ENCODE measurements at regions of chr20 and their contacts with region 1.

Region 1: GRCh38 chr20:62500237-62500864 is 24.6 kb upstream of the GATA5 start:
- DNase-seq: peak; percentile 65
- H3K4me3 Mint-ChIP-seq: no peak overlapping the region
- H3K27ac Mint-ChIP-seq: peak overlapping the region; percentile 85
- H3K4me1 Mint-ChIP-seq: peaks cover 23% of the 10 kb centered on the region
- H3K27me3 Mint-ChIP-seq: no peaks in the 10 kb centered on the region

Region 2: GRCh38 chr20:62523473-62524203 is 23.3 kb after region 1 on chr20:
- intact Hi-C with region 1: loop called (anchors 1 kb)
- DNase-seq: peak; percentile 63
- H3K4me3 Mint-ChIP-seq: peak overlapping the region; percentile 17
- H3K27ac Mint-ChIP-seq: peak overlapping the region; percentile 76
- H3K4me1 Mint-ChIP-seq: peaks cover 13% of the 10 kb centered on the region
- H3K27me3 Mint-ChIP-seq: no peaks in the 10 kb centered on the region

Region 3: DNA sequence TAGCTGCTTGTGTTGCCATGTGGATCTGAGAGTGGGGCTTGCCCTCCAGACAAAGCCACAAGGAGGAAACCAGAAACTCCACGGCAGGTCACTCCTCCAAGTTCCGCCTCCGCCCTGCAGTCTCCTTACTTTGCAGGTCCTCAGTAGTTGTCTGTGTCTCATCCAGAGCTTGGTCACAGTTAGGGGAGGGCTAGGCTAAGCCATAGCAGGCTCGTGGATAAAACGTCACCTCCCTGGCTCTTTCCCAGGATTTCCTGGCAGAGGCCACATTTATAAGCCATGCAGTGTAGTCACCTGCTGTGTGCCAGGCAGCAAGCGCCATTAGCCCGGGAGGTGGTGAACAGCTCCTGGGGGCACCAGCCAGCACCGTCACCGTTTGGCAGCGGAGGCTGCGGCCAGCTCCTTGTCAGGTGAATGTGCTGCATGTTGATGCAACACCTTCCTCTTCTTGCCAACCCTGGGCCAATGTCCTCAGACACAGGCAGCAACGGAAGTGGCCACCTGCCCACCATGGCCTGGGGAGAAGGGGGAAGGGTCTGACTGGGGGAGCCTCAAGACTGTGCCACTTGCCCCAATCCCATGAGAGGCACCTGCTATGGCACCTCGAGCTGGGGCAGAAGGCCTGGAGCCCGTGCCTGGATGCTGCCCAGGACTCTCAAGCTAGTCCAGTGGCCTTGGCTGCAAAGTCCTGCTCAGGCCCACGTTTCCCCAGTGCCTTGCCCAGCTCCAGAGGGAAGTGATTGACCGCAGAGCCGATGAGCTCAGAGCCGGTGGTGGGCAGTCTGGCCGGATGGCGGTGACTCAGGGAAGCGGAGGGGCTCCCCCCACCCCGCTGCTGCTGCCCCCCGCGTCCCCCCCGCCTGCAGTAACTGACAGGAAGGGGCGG is 102.9 kb after region 1 on chr20:
- intact Hi-C with region 1: loop called (anchors 5 kb)
- DNase-seq: peak; percentile 34
- H3K4me3 Mint-ChIP-seq: peak overlapping the region; percentile 66
- H3K27ac Mint-ChIP-seq: peak overlapping the region; percentile 56
- H3K4me1 Mint-ChIP-seq: peaks cover 37% of the 10 kb centered on the region
- H3K27me3 Mint-ChIP-seq: peaks cover 8% of the 10 kb centered on the region

Region 4: GRCh38 chr20:62782149-62782892 is 282.0 kb after region 1 on chr20:
- intact Hi-C with region 1: no loop called
- DNase-seq: no peak
- H3K4me3 Mint-ChIP-seq: no peak overlapping the region
- H3K27ac Mint-ChIP-seq: no peak overlapping the region
- H3K4me1 Mint-ChIP-seq: peaks cover 3% of the 10 kb centered on the region
- H3K27me3 Mint-ChIP-seq: no peaks in the 10 kb centered on the region

Region 5: DNA sequence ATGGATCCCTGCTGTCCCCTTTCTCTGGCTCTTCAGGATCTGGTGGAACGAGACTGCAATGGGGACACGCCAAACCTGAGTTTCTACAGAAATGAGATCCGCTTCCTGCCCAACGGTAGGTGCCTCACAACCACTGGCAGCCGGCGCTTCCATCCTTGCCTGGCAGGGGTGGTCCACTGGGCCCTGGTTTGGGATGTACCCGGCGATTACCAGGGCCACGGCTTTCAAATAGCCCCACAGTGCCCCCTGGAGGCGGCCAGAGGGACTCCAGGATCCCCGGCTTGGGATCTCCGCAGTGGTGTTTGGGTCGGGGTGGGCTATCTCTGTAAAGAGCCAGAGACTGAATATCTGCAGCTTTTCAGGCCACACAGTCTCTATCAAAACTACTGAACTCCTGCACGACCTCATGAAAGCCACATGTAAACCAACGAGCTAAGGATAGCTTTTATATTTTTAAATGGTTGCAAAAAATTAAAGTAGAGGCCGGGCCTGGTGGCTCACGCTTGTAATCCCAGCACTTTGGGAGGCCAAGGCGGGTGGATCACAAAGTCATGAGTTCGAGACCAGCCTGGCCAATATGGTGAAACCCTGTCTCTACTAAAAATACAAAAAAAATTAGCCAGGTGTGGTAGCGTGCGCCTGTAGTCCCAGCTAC is 308.0 kb after region 1 on chr20:
- intact Hi-C with region 1: loop called (anchors 1 kb)
- DNase-seq: peak; percentile 62
- H3K4me3 Mint-ChIP-seq: peak overlapping the region; percentile 57
- H3K27ac Mint-ChIP-seq: no peak overlapping the region
- H3K4me1 Mint-ChIP-seq: peaks cover 20% of the 10 kb centered on the region
- H3K27me3 Mint-ChIP-seq: no peaks in the 10 kb centered on the region